Activated CD4-positive, alpha-beta memory T cell treated with anti-CD3 and anti-CD28 coated beads for 36 hours (primary cell): ENCODE measurements at regions of chr1 and their contacts with region 1.

Region 1: DNA sequence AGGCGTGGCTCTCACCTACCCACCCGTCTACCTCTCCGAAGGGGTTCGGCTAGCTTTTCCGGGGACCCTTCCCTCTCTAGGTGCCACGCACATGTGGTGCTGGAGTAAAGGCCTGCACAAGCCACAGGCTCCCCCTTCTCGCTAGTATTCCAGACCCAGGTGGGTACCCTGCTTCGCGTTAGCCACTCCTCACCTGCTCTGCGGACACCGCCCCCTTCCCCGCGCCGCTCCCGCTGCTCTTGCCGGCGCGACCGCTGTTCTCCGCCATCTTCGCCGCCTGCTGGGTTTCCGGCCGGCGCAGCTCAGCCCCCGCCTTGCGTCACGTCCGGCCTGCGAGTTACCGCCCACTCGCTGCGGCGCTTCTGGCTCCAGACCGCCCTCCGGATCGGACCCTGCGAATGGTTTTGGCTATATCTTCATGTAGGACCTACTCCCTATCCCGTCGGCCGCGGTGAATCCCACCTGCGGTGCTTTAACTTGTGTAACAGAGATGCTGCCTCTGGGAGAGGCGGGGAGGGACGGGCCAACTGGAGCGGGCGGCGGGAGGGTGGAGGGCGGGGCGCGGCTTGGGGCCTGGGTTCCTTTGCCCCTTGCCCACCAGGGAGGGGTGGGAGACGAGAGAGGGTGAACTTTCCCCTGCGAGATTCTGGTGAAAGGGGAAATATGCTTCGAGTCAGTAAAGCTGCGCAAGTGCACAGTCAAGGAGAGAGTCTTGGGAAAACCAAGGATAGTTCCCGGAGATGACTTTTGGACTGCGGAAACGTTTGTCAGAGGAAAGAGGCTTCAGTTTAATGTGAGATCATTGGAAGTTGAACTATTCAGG is at the starts of genes NIT1 and PFDN2:
- DNase-seq: peak; percentile 92
- H3K4me3 Mint-ChIP-seq: peak within 1 kb of the TSS; percentile 93
- H3K27ac Mint-ChIP-seq: peak within 1 kb of the TSS; percentile 84
- H3K4me1 Mint-ChIP-seq: peaks cover 66% of the 10 kb centered on the region
- H3K27me3 Mint-ChIP-seq: no peaks in the 10 kb centered on the region
- total RNA-seq, gene NIT1: 65.2 to 66.5 TPM
- total RNA-seq, gene PFDN2: 152 to 155 TPM

Region 2: DNA sequence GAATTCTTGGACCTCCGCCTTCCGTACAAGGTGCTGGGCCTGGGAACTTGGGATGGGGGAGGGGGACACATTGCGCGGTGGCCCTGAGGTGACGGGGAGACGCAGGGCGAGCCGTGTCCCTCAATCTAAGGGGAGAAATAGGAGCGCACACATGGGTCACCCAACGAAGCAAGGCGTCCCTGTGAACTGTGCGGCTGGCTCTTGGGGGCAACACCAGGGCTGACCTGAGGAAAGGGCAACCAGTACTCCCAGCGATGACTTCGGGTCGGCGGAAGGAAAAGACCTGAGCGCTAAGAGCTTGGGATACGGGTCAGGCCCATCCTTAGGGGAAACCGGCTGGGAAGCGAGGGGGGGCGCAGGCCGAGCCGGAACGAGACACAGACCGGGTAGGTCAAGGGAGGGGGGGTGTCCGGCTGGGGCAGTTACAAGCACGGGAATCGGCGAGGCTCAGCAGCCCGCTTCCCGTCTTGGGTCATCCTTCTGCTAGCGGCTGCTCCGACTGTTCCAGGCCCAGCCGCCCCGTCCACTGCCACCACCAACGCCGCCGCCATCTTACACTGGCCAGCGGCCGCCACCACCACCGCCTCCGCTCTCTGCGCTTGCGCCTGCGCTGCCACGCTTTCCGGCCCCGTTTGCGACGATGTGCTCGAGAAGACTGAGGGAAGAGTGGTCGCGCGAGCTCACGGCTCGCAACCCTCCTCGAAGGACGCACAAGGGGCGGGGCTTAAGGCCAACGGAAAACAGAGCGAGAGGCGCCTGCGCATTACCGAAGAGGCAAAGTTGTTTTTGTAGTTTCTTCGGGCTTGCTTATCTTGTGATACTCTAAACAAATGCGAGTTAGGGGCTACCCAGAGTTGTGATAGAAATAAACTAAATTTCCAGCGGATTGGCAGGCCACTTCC is 855.8 kb before region 1 on chr1 and contains the start of gene DCAF8:
- CTCF ChIA-PET with region 1: no interaction called
- POLR2A ChIA-PET with region 1: no interaction called
- intact Hi-C with region 1: loop called (anchors 5 kb)
- DNase-seq: peak; percentile 99
- H3K4me3 Mint-ChIP-seq: peak within 1 kb of the TSS; percentile 96
- H3K27ac Mint-ChIP-seq: peak within 1 kb of the TSS; percentile 99
- H3K4me1 Mint-ChIP-seq: peaks cover 45% of the 10 kb centered on the region
- H3K27me3 Mint-ChIP-seq: no peaks in the 10 kb centered on the region
- total RNA-seq, gene DCAF8: 142 to 150 TPM

Region 3: DNA sequence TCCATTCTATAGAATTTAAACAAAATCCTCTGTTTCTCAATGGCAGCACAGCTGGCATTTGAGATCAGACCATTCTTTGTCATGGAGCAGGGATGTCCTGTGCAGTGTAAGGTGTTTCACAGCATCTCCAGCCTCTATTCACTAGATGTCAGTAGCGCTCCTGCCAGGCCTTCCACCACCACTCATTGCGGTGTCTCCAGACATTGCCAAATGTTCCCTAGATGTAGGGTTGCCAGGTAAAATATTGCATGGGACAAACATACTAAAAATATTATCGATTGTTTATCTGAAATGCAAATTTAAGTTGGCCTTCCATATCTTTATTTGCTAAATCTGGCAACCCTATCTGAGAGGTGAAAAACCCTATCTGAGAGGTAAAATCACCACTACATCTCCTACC is 175.0 kb before region 1 on chr1:
- CTCF ChIA-PET with region 1: no interaction called
- POLR2A ChIA-PET with region 1: no interaction called
- intact Hi-C with region 1: no loop called
- DNase-seq: no peak
- H3K4me3 Mint-ChIP-seq: no peak overlapping the region
- H3K27ac Mint-ChIP-seq: no peak overlapping the region
- H3K4me1 Mint-ChIP-seq: no peaks in the 10 kb centered on the region
- H3K27me3 Mint-ChIP-seq: no peaks in the 10 kb centered on the region

Region 4: GRCh38 chr1:161021165-161021960 is 96.6 kb before region 1 on chr1:
- CTCF ChIA-PET with region 1: no interaction called
- POLR2A ChIA-PET with region 1: interaction called, 3 read pairs
- intact Hi-C with region 1: loop called (anchors 2 kb)
- DNase-seq: peak; percentile 92
- H3K4me3 Mint-ChIP-seq: peak overlapping the region; percentile 86
- H3K27ac Mint-ChIP-seq: peak overlapping the region; percentile 82
- H3K4me1 Mint-ChIP-seq: peaks cover 51% of the 10 kb centered on the region
- H3K27me3 Mint-ChIP-seq: no peaks in the 10 kb centered on the region

Region 5: GRCh38 chr1:161132410-161133219 is 14.6 kb after region 1 on chr1 and contains the start of gene DEDD:
- CTCF ChIA-PET with region 1: interaction called, 4 read pairs
- POLR2A ChIA-PET with region 1: interaction called, 5 read pairs
- intact Hi-C with region 1: loop called (anchors 1 kb)
- DNase-seq: peak; percentile 96
- H3K4me3 Mint-ChIP-seq: no peak within 1 kb of the TSS
- H3K27ac Mint-ChIP-seq: no peak within 1 kb of the TSS
- H3K4me1 Mint-ChIP-seq: peaks cover 43% of the 10 kb centered on the region
- H3K27me3 Mint-ChIP-seq: no peaks in the 10 kb centered on the region
- total RNA-seq, gene DEDD: 35.0 to 40.2 TPM

Region 6: GRCh38 chr1:161165742-161166668 is 48.0 kb after region 1 on chr1 and contains the start of gene PPOX:
- CTCF ChIA-PET with region 1: interaction called, 8 read pairs
- POLR2A ChIA-PET with region 1: interaction called, 11 read pairs
- intact Hi-C with region 1: no loop called
- DNase-seq: peak; percentile 97
- H3K4me3 Mint-ChIP-seq: peak within 1 kb of the TSS; percentile 86
- H3K27ac Mint-ChIP-seq: peak within 1 kb of the TSS; percentile 93
- H3K4me1 Mint-ChIP-seq: peaks cover 48% of the 10 kb centered on the region
- H3K27me3 Mint-ChIP-seq: no peaks in the 10 kb centered on the region
- total RNA-seq, gene PPOX: 27.0 to 30.7 TPM